Right lobe of liver (tissue), 6 donors: ENCODE measurements at regions of chr3 and their contacts with region 1.

Region 1: DNA sequence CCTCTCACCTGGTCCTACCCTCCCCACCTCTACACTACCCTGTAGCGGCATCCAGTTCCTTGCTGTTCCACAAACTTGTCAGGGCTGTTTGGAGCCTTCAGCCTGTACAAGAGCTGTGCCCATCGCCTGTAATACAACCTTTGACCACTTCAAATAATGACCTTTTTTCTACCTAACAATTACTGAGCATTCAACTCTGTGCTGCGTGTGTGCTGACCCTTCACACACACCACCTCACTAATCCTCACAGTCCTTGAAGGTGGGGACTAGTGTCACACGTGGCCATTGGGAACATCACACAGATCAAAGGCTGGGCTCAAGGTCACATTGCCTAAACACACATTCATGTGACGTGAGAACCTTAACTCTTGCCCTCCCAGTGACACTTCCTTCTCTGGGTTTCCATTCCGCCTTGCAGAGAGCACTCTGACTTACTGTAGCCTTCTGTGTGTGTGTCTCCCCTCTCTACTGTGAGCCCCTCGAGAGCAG is 3.1 kb downstream of the C3orf20 start:
- DNase-seq: peak in 2 of 3 donors; percentile 67 to 70
- ATAC-seq: peak; percentile 72 to 83 (median 78)
- H3K4me3 ChIP-seq: no peak overlapping the region
- H3K27ac ChIP-seq: no peak overlapping the region
- H3K4me1 ChIP-seq: peaks cover 0 to 10% (median 3%) of the 10 kb centered on the region in 4 donors
- H3K27me3 ChIP-seq: no peaks in the 10 kb centered on the region
- CTCF ChIP-seq: peak in 2 of 4 donors; percentile 5 to 6
- POLR2A ChIP-seq: no peak

Region 2: GRCh38 chr3:14774431-14774830 is 96.4 kb after region 1 on chr3:
- intact Hi-C with region 1: loop called in 1 of 2 experiments (anchors 10 kb)
- DNase-seq: peak in 2 of 3 donors; percentile 32 to 33
- ATAC-seq: no peak
- H3K4me3 ChIP-seq: no peak overlapping the region
- H3K27ac ChIP-seq: no peak overlapping the region
- H3K4me1 ChIP-seq: no peaks in the 10 kb centered on the region
- H3K27me3 ChIP-seq: no peaks in the 10 kb centered on the region
- CTCF ChIP-seq: no peak
- POLR2A ChIP-seq: no peak